Psoas muscle (tissue), 8 donors: ENCODE measurements at regions of chr19 and their contacts with region 1.

Region 1: DNA sequence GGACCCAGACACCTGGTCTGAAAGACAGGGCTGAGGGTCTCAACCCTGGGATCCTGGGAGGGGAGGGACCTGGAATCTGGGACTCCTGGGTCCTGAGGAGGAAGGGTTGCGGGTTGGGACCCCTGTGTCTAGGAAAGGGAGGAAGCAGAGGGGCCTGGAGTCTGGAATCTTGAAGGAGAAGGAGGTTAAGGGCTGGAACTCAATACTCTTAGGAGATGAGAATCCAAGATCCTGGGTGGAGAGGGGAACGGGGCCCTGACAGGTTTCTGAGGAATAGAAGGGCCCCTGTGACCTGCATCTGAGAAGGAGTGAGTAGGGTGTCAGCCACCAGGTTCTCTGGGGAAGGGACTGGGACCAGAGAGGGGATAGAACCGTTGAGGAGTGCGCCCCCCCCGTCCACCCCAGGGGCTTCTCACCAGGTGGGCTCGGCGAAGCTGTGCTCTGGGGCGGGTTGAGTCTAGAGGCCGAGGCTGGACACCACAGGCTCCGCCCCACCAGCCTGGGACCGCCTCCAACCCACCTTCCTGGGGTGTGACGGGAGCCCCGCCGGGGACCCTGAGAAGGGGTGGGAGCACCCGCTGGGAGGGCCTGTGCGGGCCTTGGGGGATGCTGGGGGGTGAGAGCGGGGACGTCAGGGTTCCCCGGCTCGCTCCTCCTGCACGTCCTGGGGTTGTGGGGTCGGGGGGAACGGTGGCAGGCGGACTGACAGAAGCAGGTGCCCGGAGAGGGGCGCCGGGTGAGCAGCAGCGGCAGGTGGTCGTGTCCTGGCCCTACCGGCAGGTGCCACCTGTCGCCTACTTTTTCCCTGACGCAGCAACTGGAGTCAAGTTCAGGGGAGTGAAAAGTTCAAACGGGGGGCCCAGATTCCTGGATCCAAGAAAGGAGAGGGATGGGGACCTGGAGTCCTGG is at the start of gene MAMSTR:
- DNase-seq: peak; percentile 62 to 77
- ATAC-seq: peak; percentile 43 to 60 (median 56)
- H3K4me3 ChIP-seq: peak within 1 kb of the TSS; percentile 78
- H3K27ac ChIP-seq: peak within 1 kb of the TSS; percentile 91
- H3K4me1 ChIP-seq: peaks cover 30% of the 10 kb centered on the region
- H3K27me3 ChIP-seq: no peaks in the 10 kb centered on the region
- CTCF ChIP-seq: no peak
- total RNA-seq, gene MAMSTR: 7.9 to 50.9 (median 32.9) TPM

Region 2: GRCh38 chr19:48637170-48637947 is 82.2 kb before region 1 on chr19 and contains the start of gene DBP:
- intact Hi-C with region 1: loop called in 1 of 2 experiments (anchors 2 kb)
- DNase-seq: peak; percentile 99 to 100
- ATAC-seq: peak; percentile 75 to 80 (median 76)
- H3K4me3 ChIP-seq: peak within 1 kb of the TSS; percentile 87
- H3K27ac ChIP-seq: peak within 1 kb of the TSS; percentile 97
- H3K4me1 ChIP-seq: peaks cover 33% of the 10 kb centered on the region
- H3K27me3 ChIP-seq: no peaks in the 10 kb centered on the region
- CTCF ChIP-seq: no peak
- total RNA-seq, gene DBP: 3.6 to 14.5 (median 6.5) TPM